ENCODE measurements at regions of chr3 and their contacts with region 1.

Region 1: GRCh38 chr3:146577662-146578061 is 27.5 kb downstream of the PLSCR5 start:
- DNase-seq: no peak
- ATAC-seq: peak in 1 of 4 donors; percentile 55
- H3K4me3 ChIP-seq: no peak overlapping the region
- H3K27ac ChIP-seq: no peak overlapping the region
- H3K4me1 ChIP-seq: no peaks in the 10 kb centered on the region
- H3K27me3 ChIP-seq: no peaks in the 10 kb centered on the region
- CTCF ChIP-seq: peak in 11 of 12 donors; percentile 23 to 61 (median 56)
- POLR2A ChIP-seq: no peak

Region 2: DNA sequence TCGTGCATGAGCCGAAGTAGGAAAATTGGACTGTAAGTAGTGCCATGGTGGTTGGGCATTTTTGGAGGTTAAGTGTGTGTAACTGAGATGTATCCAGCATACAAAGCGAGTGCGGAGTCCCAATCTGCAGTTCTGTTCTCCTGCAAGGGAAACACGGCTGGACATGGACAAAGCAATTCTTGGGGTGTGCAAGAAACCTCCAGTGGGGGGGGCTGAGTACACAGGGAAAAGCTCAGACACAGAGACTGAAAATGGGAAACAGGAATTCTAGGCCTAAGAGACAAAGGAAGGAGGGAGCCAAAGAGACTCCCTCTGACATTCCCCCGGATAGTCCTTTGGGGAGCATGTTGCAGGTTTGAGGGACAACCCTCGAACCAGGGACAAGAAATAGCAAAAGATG is 243.5 kb before region 1 on chr3:
- intact Hi-C with region 1: loop called (anchors 1 to 10 kb)
- DNase-seq: peak in 2 of 5 donors; percentile 17 to 26
- ATAC-seq: peak in 1 of 4 donors; percentile 52
- H3K4me3 ChIP-seq: no peak overlapping the region
- H3K27ac ChIP-seq: no peak overlapping the region
- H3K4me1 ChIP-seq: no peaks in the 10 kb centered on the region
- H3K27me3 ChIP-seq: no peaks in the 10 kb centered on the region
- CTCF ChIP-seq: peak in 10 of 12 donors; percentile 15 to 51 (median 39)
- POLR2A ChIP-seq: no peak

Region 3: DNA sequence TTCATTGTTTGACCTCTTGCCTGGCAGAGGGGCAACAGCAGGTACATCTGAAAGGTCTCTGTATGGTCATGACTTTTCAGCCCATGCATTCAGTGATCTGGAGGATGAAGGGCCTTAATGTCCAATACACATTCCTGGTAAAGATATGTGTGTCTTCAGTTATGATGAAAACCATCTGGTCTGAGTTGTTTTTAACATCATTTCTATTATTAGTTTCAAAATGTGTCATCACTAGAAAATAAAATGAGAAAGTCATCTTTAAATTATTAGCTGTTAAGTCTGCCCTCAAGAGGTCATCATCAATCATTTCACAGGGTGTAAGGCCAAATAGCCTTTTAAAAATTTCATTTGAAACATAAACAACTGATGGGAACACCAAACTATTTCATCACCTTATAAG is 234.7 kb before region 1 on chr3:
- intact Hi-C with region 1: loop called in 4 of 10 experiments (anchors 5 to 10 kb)
- DNase-seq: no peak
- ATAC-seq: no peak
- H3K4me3 ChIP-seq: no peak overlapping the region
- H3K27ac ChIP-seq: no peak overlapping the region
- H3K4me1 ChIP-seq: no peaks in the 10 kb centered on the region
- H3K27me3 ChIP-seq: no peaks in the 10 kb centered on the region
- CTCF ChIP-seq: no peak
- POLR2A ChIP-seq: no peak

Measured in heart left ventricle (tissue), 16 donors.